Ascending aorta (tissue), 2 donors: ENCODE measurements at regions of chr19 and their contacts with region 1.

Region 1: GRCh38 chr19:15332311-15332996 is at the start of gene BRD4:
- DNase-seq: peak in 1 of 2 donors; percentile 80
- H3K4me3 ChIP-seq: peak within 1 kb of the TSS; percentile 97 to 98
- H3K27ac ChIP-seq: peak within 1 kb of the TSS; percentile 94 to 98
- H3K4me1 ChIP-seq: peaks cover 13 to 58% of the 10 kb centered on the region in 2 donors
- H3K27me3 ChIP-seq: no peaks in the 10 kb centered on the region
- CTCF ChIP-seq: no peak
- total RNA-seq, gene BRD4: 55.3 TPM

Region 2: DNA sequence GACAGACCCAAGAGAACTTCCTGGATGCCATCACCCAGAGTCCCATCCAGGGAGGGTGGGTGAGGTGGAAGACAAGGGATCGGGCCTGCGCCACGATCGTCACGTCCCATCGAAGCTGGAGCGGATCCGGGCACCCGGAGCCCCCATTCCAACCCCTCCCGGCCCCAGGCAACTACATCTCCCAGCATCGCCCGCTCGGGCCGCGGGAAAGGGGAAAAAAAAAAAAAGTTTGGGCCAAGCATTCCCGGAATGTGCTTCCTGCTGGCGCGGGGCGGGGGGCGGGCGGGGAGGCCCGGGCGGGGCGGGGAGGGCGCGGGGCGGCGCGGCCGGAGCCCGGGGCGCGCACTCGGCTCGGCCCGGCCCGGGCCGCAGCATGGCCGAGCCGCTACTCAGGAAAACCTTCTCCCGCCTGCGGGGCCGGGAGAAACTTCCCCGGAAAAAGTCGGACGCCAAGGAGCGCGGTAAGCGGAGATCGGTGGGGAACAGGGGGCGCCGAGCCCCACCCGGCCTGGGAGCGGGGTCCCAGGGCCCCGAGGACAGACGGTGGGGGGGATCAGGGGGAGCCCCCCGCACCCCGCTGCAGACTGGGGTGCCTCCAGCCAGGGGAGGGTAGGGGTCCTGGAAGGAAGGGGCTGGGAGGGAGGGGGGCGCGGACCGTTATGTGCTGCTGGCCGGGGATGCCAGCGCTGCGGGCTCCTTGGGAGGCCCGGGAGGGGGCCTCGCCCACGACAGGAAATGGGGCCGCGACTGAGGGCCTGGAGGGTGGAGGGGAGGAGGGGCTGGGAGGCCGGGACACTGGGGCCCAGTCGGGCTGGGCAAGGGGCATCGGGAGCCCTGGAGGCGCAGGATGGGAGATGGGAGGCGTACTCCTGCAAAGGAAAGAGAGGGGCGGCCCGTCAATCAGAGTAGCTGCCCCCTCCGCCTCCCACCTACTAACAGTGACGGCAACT is 225.1 kb before region 1 on chr19 and contains the start of gene SYDE1:
- intact Hi-C with region 1: loop called (anchors 5 kb)
- DNase-seq: peak in 1 of 2 donors; percentile 78
- H3K4me3 ChIP-seq: peak within 1 kb of the TSS; percentile 84 to 95
- H3K27ac ChIP-seq: peak within 1 kb of the TSS; percentile 92 to 97
- H3K4me1 ChIP-seq: peaks cover 4 to 10% of the 10 kb centered on the region in 2 donors
- H3K27me3 ChIP-seq: no peaks in the 10 kb centered on the region
- CTCF ChIP-seq: no peak
- total RNA-seq, gene SYDE1: 104 TPM

Region 3: DNA sequence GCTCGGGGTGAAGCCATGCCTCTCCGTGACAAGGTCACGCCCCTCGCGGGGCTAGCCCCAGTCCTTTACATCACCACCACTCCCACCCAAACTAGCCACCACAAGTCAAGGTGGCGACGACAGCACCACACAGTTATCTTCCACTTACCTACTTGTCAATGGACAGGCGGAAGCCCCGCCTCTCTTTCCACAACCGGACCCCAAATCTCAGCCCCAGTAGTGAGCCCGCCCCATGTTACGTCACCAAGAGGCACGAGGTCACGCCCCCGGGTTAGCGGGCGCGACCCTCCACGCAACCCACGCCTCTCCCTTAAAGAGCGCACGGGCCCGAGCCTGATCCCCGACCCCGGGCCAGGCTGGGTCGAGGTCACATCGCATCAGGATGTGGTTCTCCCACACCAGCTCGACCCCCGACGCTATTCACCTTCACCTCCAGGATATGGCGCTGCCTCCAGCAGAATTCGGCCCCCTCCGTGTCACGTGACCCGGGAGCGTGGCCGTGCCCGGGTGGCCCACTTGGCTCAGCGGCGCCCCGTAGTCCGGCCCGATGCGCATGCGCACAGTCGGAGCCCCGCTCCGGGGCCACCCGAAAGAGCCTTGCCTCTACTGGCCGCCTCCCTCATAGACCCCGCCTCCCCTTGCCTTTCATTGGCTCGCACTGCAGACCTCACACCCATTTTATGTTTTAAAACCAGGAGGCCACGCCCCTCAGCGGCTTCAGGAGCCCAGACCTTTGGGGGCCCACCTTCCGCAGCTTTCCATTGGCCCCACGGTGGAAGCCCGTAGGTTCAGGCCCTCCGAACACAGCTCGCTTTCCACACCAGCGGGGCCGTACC is 207.0 kb before region 1 on chr19:
- intact Hi-C with region 1: loop called (anchors 2 kb)
- DNase-seq: peak; percentile 95 to 99
- H3K4me3 ChIP-seq: peak overlapping the region; percentile 60 to 84
- H3K27ac ChIP-seq: peak overlapping the region; percentile 81 to 89
- H3K4me1 ChIP-seq: peaks cover 3 to 12% of the 10 kb centered on the region in 2 donors
- H3K27me3 ChIP-seq: no peaks in the 10 kb centered on the region
- CTCF ChIP-seq: no peak

Region 4: GRCh38 chr19:15195371-15196334 is 136.8 kb before region 1 on chr19:
- intact Hi-C with region 1: loop called (anchors 5 kb)
- DNase-seq: peak; percentile 57 to 93
- H3K4me3 ChIP-seq: peak overlapping the region; percentile 58 to 69
- H3K27ac ChIP-seq: peak overlapping the region; percentile 96
- H3K4me1 ChIP-seq: peaks cover 0 to 35% of the 10 kb centered on the region in 2 donors
- H3K27me3 ChIP-seq: no peaks in the 10 kb centered on the region
- CTCF ChIP-seq: peak in 1 of 3 experiments; percentile 14

Region 5: DNA sequence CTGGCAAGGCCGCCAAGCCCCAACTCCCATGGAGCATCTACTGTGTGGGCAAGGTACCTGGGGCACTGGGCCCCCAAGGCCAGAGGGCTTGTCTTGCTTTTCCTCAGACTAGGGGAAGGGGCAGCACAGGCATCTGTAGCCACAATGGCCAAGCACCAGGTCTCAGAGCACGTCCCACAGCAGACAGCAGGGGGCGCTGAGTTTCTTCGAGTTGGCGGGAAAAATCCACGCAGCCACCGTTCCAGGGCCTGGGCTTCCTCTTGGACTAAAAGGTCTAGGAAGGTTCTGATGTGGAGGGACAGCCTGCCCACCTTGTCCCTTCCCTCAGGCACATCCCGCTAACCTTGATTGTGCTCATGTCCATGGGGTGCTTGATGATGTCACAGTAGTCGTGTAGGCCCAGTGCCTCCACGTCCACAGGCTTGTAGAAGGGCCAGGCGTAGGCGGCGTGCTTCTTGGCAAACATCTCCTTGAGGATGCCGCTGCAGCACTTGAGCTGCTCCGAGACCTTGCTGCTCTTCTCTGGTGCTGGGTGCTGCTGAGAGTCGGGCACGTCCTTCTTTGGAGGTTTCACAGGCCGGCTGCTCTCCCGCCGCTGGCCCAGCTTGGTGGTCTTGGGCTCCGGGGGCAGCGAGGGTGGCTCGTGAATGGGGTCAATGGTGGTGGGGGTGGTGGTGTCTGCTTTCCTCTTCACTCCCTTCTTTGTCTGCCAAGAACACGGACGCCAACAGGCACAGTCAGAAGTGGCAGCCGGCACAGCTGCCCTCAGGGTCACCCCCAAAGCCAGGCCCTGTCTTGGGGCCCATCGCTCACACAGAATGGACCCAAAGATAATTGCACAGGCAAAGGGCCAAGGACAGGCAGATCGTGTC is 68.2 kb before region 1 on chr19:
- intact Hi-C with region 1: loop called (anchors 2 kb)
- DNase-seq: peak in 1 of 2 donors; percentile 89
- H3K4me3 ChIP-seq: no peak overlapping the region
- H3K27ac ChIP-seq: peak overlapping the region; percentile 69 to 83
- H3K4me1 ChIP-seq: peaks cover 19 to 40% of the 10 kb centered on the region in 2 donors
- H3K27me3 ChIP-seq: no peaks in the 10 kb centered on the region
- CTCF ChIP-seq: peak; percentile 78 to 87 (median 78)

Region 6: GRCh38 chr19:15297416-15298224 is 34.8 kb before region 1 on chr19:
- intact Hi-C with region 1: no loop called
- DNase-seq: no peak
- H3K4me3 ChIP-seq: peak overlapping the region in 1 of 2 donors; percentile 21
- H3K27ac ChIP-seq: peak overlapping the region; percentile 42 to 54
- H3K4me1 ChIP-seq: peaks cover 21 to 86% of the 10 kb centered on the region in 2 donors
- H3K27me3 ChIP-seq: no peaks in the 10 kb centered on the region
- CTCF ChIP-seq: no peak

Region 7: GRCh38 chr19:15365264-15365663 is 32.8 kb after region 1 on chr19:
- intact Hi-C with region 1: no loop called
- DNase-seq: no peak
- H3K4me3 ChIP-seq: no peak overlapping the region
- H3K27ac ChIP-seq: no peak overlapping the region
- H3K4me1 ChIP-seq: no peaks in the 10 kb centered on the region
- H3K27me3 ChIP-seq: no peaks in the 10 kb centered on the region
- CTCF ChIP-seq: no peak